PC-9 (cell line): ENCODE measurements at regions of chr10 and their contacts with region 1.

Region 1: GRCh38 chr10:17617031-17617911 is at the start of gene HACD1:
- DNase-seq: peak; percentile 46 to 81
- H3K4me3 ChIP-seq: peak within 1 kb of the TSS; percentile 77
- H3K27ac ChIP-seq: peak within 1 kb of the TSS; percentile 65
- H3K4me1 ChIP-seq: no peaks in the 10 kb centered on the region
- H3K27me3 ChIP-seq: no peaks in the 10 kb centered on the region
- CTCF ChIP-seq: no peak; the same call in 1 of the 2 replicates
- total RNA-seq, gene HACD1: 29.6 and 36.3 TPM in 2 replicates

Region 2: DNA sequence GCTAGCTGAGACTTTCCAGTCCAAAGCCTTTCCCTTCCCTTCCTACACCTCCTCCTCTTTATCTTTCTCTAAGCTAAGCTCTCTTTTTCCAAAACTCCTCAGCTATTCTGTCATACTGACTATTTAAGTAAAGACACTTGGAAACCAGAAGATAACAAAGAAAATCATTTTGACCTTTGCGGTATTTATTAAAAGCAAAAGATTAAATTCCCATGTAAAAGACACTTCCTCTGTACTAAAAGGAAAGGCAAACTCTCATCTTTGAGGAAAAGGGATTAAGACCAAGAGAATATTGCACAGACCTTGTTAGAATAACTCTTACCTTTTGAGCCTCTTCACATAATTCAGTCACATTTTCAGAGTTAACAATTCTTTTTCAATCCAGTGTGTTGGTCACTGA is 178.7 kb before region 1 on chr10:
- CTCF ChIA-PET with region 1: no interaction called
- POLR2A ChIA-PET with region 1: interaction called, 24 read pairs
- intact Hi-C with region 1: no loop called
- DNase-seq: no peak
- H3K4me3 ChIP-seq: no peak overlapping the region
- H3K27ac ChIP-seq: no peak overlapping the region
- H3K4me1 ChIP-seq: no peaks in the 10 kb centered on the region
- H3K27me3 ChIP-seq: no peaks in the 10 kb centered on the region
- CTCF ChIP-seq: no peak

Region 3: DNA sequence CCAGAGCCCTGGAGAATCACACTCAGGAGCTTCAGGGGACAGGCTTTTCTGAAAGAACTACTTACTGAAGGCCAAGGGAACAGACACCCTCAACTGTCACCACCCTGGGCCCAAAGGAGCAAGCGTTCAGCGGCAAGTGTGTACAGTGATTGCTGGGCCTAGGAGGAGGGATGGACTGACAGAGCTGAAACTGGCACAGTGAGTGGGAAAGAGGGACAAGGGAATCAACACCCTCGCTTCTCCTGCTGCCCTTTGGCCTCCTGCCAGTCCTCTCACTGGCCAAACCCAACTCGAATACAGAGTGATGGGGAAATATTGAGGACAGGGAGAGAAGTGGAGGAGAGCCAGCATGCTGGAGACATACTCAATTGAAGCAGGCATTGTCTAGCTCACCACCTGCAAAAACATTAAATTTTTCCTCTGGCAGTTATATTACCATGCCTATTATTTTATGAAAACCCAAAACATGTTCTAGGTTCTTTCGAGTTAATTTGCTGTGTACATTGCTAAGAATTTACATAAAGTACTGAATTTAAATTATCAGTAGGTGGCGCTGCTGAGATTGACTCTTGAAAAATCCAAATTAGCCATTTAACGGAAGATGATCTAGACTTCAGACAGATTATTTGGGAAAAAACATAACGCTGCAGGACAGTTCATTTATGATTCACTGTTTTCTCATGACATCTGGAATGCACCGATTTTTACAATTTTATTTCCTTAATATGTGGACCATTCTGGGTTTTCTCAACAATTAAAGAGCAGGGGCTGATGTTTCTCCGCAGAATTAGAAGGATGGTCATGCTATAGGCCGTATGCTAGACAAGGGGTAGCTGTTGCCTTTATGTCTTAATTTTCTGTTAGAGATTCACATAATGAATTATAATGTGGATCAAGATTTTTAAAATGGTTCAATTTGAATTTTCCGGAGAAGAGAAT is 120.0 kb after region 1 on chr10:
- CTCF ChIA-PET with region 1: no interaction called
- POLR2A ChIA-PET with region 1: no interaction called
- intact Hi-C with region 1: loop called (anchors 5 kb)
- DNase-seq: no peak
- H3K4me3 ChIP-seq: no peak overlapping the region
- H3K27ac ChIP-seq: no peak overlapping the region
- H3K4me1 ChIP-seq: no peaks in the 10 kb centered on the region
- H3K27me3 ChIP-seq: no peaks in the 10 kb centered on the region
- CTCF ChIP-seq: peak; percentile 65

Region 4: GRCh38 chr10:18005781-18006456 is 388.6 kb after region 1 on chr10:
- CTCF ChIA-PET with region 1: no interaction called
- POLR2A ChIA-PET with region 1: no interaction called
- intact Hi-C with region 1: no loop called
- DNase-seq: no peak
- H3K4me3 ChIP-seq: no peak overlapping the region
- H3K27ac ChIP-seq: no peak overlapping the region
- H3K4me1 ChIP-seq: no peaks in the 10 kb centered on the region
- H3K27me3 ChIP-seq: no peaks in the 10 kb centered on the region
- CTCF ChIP-seq: no peak